Colonic mucosa (tissue), 4 donors: ENCODE measurements at regions of chr9 and their contacts with region 1.

Region 1: DNA sequence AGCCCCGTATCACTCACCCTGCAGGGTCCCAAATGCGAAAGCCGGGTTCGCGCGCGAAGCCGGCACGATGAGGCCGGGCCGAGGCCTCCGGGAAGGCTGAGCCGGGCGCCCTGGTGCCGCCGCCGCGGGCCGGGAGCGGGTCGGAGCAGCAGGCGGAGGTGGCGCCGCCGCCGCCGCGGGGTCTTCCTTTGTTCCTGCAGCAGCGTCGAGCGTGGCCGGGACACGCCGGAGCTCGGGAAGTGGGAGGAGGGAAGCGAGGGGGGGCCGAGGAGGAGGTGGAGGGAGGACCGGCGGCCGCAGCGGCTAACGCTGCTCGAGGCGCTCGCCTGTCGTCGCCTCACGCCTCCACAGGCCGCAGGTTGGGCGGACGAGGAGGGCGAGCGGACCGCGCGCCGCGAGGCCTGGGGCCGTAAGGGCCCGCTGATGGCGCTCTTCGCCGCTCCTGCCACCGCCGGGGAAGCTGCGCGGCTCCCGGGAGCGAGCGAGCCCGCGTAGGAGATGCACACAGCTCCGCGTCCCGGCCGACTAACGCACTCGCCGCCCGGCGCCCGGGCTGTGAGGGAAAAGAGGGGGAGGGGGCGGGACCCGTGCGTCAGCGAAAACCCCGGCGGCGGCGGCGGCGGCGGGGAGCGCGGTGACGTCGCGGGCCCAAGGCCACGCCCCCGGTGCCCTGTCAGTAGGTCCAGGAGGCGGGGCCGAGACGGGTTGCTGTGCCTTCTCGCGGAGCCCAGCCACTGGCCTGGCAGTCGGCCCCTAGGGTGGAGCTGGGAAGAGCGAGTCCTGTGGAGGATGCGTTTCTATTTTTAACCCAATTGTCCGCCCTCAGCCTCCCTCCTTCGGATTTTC is at the start of gene ZFAND5:
- DNase-seq: peak; percentile 97
- H3K4me3 ChIP-seq: peak within 1 kb of the TSS; percentile 79
- H3K27ac ChIP-seq: peak within 1 kb of the TSS; percentile 100
- H3K4me1 ChIP-seq: peaks cover 6% of the 10 kb centered on the region
- H3K27me3 ChIP-seq: no peaks in the 10 kb centered on the region
- CTCF ChIP-seq: no peak
- total RNA-seq, gene ZFAND5: 86.9 to 164 TPM

Region 2: GRCh38 chr9:72305102-72305546 is 59.8 kb before region 1 on chr9:
- intact Hi-C with region 1: loop called (anchors 5 kb)
- DNase-seq: peak; percentile 92
- H3K4me3 ChIP-seq: peak overlapping the region; percentile 20
- H3K27ac ChIP-seq: peak overlapping the region; percentile 89
- H3K4me1 ChIP-seq: no peaks in the 10 kb centered on the region
- H3K27me3 ChIP-seq: no peaks in the 10 kb centered on the region
- CTCF ChIP-seq: no peak